HEK293T (cell line): ENCODE measurements at regions of chr15 and their contacts with region 1.

Region 1: GRCh38 chr15:75201609-75202250 is at the start of gene C15orf39:
- DNase-seq: peak; percentile 94

Region 2: GRCh38 chr15:75023181-75023871 is 178.4 kb before region 1 on chr15 and contains the start of gene PPCDC:
- CTCF ChIA-PET with region 1: interaction called, 33 read pairs
- POLR2A ChIA-PET with region 1: interaction called, 18 read pairs
- DNase-seq: peak; percentile 100

Region 3: DNA sequence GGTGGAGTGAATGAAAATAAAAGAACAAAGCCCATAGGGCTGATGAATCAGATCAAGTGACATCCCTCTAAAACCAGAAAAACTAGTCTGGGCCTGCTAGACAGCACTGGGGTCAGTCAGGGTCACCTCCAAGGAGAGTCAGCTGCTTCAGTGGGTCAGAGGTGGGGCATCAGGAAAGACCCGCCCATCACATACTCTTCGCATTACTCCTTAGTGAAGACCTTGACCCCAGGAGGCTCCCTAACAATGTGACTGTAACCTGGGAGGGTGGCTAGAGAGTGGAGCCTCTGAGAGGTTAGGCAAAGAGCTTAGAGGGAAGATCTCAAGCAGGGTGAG is 165.4 kb before region 1 on chr15:
- CTCF ChIA-PET with region 1: interaction called, 33 read pairs
- POLR2A ChIA-PET with region 1: interaction called, 8 read pairs
- DNase-seq: no peak

Region 4: GRCh38 chr15:75104804-75105535 is 96.8 kb before region 1 on chr15:
- CTCF ChIA-PET with region 1: interaction called, 4 read pairs
- POLR2A ChIA-PET with region 1: interaction called, 20 read pairs
- DNase-seq: peak; percentile 41

Region 5: GRCh38 chr15:75188489-75188888 is 13.2 kb before region 1 on chr15:
- CTCF ChIA-PET with region 1: interaction called, 5 read pairs
- POLR2A ChIA-PET with region 1: interaction called, 20 read pairs
- DNase-seq: no peak

Region 6: GRCh38 chr15:75321708-75322107 is 120.0 kb after region 1 on chr15:
- CTCF ChIA-PET with region 1: no interaction called
- POLR2A ChIA-PET with region 1: no interaction called
- DNase-seq: no peak

Region 7: GRCh38 chr15:75335705-75336355 is 134.1 kb after region 1 on chr15 and contains the start of gene COMMD4:
- CTCF ChIA-PET with region 1: no interaction called
- POLR2A ChIA-PET with region 1: no interaction called
- DNase-seq: peak; percentile 81